Activated CD4-positive, alpha-beta memory T cell treated with anti-CD3 and anti-CD28 coated beads for 36 hours (primary cell): ENCODE measurements at regions of chr15 and their contacts with region 1.

Region 1: DNA sequence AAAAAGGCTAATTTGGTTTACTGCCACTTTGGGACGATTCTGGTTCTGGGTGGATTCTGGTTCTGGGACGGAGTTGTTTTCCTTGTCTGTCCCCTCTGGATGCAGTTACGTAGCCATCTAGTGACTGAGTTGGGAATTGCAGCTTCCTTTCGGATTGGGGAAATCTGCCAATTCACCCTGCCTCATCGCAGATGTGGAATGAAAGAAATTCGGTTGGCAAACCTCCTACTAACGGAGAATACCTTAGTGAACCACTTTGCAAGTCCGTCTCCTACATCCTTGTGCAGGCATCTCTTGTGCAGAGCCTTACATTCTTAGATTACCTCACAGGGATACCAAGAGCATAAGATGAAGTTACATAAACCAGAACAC is 31.5 kb upstream of the AP4E1 start:
- DNase-seq: peak; percentile 70
- H3K4me3 Mint-ChIP-seq: peak overlapping the region; percentile 71
- H3K27ac Mint-ChIP-seq: peak overlapping the region; percentile 14
- H3K4me1 Mint-ChIP-seq: peaks cover 48% of the 10 kb centered on the region
- H3K27me3 Mint-ChIP-seq: peaks cover 3% of the 10 kb centered on the region

Region 2: DNA sequence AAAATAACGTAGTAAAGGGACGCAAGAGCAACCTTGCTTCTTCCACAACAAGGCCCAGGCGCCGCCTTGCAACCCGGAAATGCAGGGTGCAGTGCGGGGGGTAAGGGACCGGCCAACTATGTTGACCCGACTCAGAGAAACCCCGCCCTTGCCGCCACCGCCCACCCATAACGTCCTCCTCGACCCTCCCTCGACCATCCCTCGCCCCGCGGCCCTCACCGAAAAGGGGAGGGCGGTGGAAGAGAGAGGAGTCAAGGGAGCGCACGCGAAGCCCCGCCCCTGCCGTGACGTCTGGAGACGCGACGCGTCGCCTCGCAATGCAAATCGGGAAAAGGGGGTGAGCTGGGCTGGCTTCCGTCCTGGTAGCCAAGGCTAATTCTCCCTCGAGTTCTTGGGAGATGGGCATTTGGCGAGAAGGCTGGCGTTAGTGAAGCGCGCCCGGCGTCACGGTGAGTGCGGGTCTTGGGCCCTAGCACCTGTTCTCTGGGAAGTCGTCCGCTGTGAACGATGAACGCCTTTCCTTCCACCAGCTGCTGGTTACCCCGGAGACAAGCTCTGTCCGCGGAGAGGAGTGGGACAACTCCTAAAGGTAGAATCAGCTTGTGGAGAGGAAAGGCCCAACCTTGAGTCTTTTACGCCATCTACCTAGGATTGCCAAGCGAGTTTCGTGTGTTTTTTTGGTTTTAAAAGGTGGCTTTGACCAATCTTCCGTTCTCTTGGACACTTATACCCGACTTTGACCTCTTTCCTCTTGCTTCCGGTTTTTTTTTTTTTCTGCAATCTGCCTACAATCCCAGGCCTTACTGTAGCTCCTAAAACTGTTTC is 452.7 kb before region 1 on chr15 and contains the start of gene USP8:
- CTCF ChIA-PET with region 1: no interaction called
- POLR2A ChIA-PET with region 1: no interaction called
- intact Hi-C with region 1: loop called (anchors 1 kb)
- DNase-seq: peak; percentile 96
- H3K4me3 Mint-ChIP-seq: peak within 1 kb of the TSS; percentile 94
- H3K27ac Mint-ChIP-seq: peak within 1 kb of the TSS; percentile 82
- H3K4me1 Mint-ChIP-seq: peaks cover 29% of the 10 kb centered on the region
- H3K27me3 Mint-ChIP-seq: no peaks in the 10 kb centered on the region
- total RNA-seq, gene USP8: 43.4 to 46.0 TPM

Region 3: DNA sequence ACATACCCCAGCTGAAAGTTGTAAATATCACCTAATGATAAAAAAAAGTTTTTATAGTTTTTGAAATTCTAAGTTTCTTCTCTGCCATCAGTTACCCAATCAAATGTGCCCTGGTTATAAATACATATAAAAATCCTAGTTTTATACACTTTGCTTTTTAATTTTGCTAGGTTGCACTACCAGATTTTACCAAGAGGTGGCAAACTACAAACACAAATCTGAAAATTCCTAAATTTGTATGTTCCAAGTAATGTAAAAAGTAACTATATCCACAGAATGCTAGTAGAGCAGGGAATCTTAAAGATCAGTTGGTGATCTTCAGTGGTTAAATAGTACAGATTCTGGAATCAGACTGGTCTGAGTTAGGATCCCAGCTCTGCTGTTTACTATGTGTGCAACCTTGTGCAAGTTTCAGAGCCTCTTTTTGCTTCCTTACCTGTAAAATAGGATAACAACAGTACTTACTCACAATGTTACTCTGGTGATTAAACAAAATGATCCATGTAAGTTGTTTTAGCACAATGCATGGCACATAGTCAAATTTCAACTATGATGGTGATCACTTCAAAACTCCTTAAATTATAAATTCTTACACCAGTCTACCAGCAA is 201.3 kb before region 1 on chr15:
- CTCF ChIA-PET with region 1: interaction called, 15 read pairs
- POLR2A ChIA-PET with region 1: no interaction called
- intact Hi-C with region 1: loop called (anchors 1 kb)
- DNase-seq: no peak
- H3K4me3 Mint-ChIP-seq: no peak overlapping the region
- H3K27ac Mint-ChIP-seq: peak overlapping the region; percentile 33
- H3K4me1 Mint-ChIP-seq: peaks cover 40% of the 10 kb centered on the region
- H3K27me3 Mint-ChIP-seq: no peaks in the 10 kb centered on the region

Region 4: GRCh38 chr15:50686468-50687301 is 190.3 kb before region 1 on chr15 and contains the start of gene TRPM7:
- CTCF ChIA-PET with region 1: interaction called, 3 read pairs
- POLR2A ChIA-PET with region 1: interaction called, 3 read pairs
- intact Hi-C with region 1: loop called (anchors 1 kb)
- DNase-seq: peak; percentile 93
- H3K4me3 Mint-ChIP-seq: peak within 1 kb of the TSS; percentile 99
- H3K27ac Mint-ChIP-seq: peak within 1 kb of the TSS; percentile 100
- H3K4me1 Mint-ChIP-seq: peaks cover 51% of the 10 kb centered on the region
- H3K27me3 Mint-ChIP-seq: no peaks in the 10 kb centered on the region
- total RNA-seq, gene TRPM7: 37.4 to 44.8 TPM

Region 5: GRCh38 chr15:50726315-50726714 is 150.7 kb before region 1 on chr15:
- CTCF ChIA-PET with region 1: interaction called, 10 read pairs
- POLR2A ChIA-PET with region 1: no interaction called
- intact Hi-C with region 1: no loop called
- DNase-seq: no peak
- H3K4me3 Mint-ChIP-seq: no peak overlapping the region
- H3K27ac Mint-ChIP-seq: no peak overlapping the region
- H3K4me1 Mint-ChIP-seq: peaks cover 12% of the 10 kb centered on the region
- H3K27me3 Mint-ChIP-seq: no peaks in the 10 kb centered on the region

Region 6: DNA sequence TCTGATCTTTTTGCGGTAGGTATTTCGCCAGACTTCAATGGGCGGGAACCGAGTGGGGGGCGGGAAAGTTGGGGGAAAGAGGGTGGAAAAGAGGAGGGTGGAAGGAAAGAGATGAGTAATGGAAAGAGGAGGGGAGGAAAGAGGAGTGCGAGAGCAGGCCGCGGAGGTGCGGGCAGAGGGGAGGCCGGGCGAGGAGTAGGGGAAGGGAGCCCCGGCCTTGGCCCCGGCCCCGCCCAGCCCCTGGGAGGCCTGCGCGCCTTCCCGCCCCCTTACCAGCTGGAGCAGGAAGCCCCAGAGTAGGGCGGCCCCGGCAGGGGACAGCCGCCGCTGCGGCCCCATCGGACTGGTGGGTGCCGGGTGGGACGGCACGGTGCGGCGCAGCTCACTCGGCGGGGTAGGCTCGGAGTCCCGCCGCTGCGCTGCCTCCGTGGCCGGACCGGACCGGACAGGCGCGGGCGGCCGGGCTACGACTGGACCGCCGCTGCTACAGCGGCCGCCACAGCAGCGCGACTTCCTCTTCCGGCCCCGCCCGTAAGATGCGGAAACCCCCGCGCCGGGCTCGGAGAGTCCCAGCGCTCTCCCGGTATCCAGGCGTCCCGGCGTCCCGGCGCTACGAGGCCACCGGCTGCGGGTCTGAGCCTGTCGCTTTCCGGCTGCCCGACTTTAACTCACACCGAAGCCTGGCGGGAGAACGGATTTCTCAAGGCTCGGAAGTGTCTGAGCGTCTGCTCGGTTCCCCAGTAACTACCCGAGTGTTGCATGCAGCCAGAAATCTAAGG is 111.6 kb before region 1 on chr15 and contains the start of gene SPPL2A:
- CTCF ChIA-PET with region 1: interaction called, 8 read pairs
- POLR2A ChIA-PET with region 1: interaction called, 11 read pairs
- intact Hi-C with region 1: loop called (anchors 1 kb)
- DNase-seq: peak; percentile 94
- H3K4me3 Mint-ChIP-seq: peak within 1 kb of the TSS; percentile 92
- H3K27ac Mint-ChIP-seq: peak within 1 kb of the TSS; percentile 93
- H3K4me1 Mint-ChIP-seq: peaks cover 56% of the 10 kb centered on the region
- H3K27me3 Mint-ChIP-seq: no peaks in the 10 kb centered on the region
- total RNA-seq, gene SPPL2A: 79.9 to 82.1 TPM

Region 7: GRCh38 chr15:50865515-50866353 is 11.2 kb before region 1 on chr15:
- CTCF ChIA-PET with region 1: interaction called, 11 read pairs
- POLR2A ChIA-PET with region 1: no interaction called
- intact Hi-C with region 1: no loop called
- DNase-seq: no peak
- H3K4me3 Mint-ChIP-seq: no peak overlapping the region
- H3K27ac Mint-ChIP-seq: no peak overlapping the region
- H3K4me1 Mint-ChIP-seq: no peaks in the 10 kb centered on the region
- H3K27me3 Mint-ChIP-seq: no peaks in the 10 kb centered on the region